ENCODE measurements at regions of chr18 and their contacts with region 1.

Region 1: GRCh38 chr18:59070181-59070912 is 69.3 kb upstream of the SEC11C start:
- ATAC-seq: peak; percentile 90 to 99 (median 95)
- H3K4me3 ChIP-seq: no peak overlapping the region
- H3K27ac ChIP-seq: no peak overlapping the region
- H3K4me1 ChIP-seq: peaks cover 0 to under 1% of the 10 kb centered on the region in 2 donors

Region 2: DNA sequence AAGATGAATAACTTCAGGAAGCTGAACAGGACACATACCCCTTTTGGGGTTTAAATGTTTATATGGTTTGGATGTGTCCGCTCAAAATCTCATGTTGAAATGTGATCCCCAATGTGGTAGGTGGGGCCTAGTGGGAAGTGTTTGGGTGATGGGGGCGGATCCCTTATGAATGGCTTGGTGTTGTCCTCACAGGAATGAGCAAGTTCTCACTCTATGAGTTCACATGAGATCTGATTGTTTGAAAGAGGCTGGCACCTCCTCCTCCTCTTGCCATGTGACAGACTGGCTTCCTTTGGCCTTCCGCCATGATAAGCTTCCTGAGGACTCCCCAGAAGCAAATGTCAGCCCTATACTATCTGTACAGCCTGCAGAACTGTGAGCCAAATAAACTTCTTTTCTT is 294.3 kb before region 1 on chr18:
- in situ Hi-C with region 1: loop called (anchors 5 to 10 kb)
- ATAC-seq: peak in 3 of 8 experiments; percentile 32 to 48 (median 47)
- H3K4me3 ChIP-seq: no peak overlapping the region
- H3K27ac ChIP-seq: no peak overlapping the region
- H3K4me1 ChIP-seq: no peaks in the 10 kb centered on the region

Region 3: DNA sequence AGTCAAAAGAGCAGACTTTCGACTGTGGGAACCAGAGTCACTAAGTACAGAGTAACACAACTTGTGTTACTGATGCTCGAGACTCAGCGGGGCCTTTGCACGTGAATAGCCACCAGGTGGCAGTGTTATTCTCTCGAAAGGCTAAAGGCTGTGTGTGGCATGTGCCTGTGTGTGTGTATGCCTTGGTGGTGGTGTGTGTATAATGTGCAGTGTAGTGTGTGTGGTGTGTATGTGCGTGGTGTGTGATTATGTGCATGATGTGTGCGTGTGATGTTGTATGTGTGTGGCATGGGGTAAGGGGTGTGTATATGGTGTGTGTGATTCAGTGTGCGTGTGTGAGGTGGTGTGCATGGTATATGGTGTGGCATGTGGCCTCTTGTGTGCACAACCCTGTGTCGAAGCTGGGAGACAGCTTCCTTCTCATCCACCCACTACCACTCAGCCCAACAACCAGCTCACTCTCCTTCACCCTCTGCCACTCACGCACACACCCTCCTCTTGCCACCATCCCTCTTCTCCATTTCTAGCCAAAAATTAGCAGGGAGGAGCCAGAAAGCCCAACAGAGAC is 288.6 kb before region 1 on chr18:
- in situ Hi-C with region 1: loop called (anchors 5 to 10 kb)
- ATAC-seq: peak; percentile 78 to 90 (median 89)
- H3K4me3 ChIP-seq: no peak overlapping the region
- H3K27ac ChIP-seq: no peak overlapping the region
- H3K4me1 ChIP-seq: peaks cover 15% of the 10 kb centered on the region in 2 donors

Region 4: DNA sequence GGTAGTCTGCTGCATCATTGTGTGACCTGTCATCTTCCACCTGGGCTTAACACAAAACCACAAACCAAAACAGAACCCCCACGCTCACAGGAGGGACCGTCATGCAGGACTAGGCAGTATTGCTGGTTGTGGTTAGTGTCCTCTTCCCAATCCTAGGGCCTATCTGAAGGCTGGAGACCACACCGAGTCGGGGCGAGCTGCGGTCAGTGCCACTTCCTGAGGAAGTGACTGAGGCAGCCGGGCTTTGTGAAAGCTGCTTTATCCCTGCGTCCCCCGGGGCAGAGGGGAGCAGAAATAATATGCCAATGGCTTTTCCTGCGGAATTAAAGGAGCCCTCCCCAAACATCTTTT is 182.8 kb before region 1 on chr18:
- in situ Hi-C with region 1: loop called in 1 of 9 experiments (anchors 25 kb)
- ATAC-seq: no peak
- H3K4me3 ChIP-seq: no peak overlapping the region
- H3K27ac ChIP-seq: peak overlapping the region in 1 of 2 donors; percentile 8
- H3K4me1 ChIP-seq: peaks cover 4 to 8% of the 10 kb centered on the region in 2 donors

Region 5: DNA sequence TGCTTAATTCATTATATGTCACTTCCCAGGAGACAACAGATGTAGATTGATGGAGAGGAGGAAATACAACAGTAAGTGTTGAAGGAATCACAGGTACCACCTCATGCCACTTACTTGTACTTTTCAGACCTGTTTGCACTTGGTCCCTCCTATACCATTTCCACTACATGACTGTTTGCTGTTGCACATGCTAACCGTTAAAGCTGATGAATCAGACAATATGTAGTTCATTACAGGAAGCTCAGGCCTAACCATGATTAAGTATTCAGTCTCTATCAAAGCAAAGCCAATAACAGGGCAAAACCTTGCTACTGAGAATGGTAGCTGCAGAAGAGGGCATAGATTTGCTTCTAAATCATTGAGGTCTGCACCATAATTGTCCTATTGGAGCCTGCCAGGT is 119.4 kb after region 1 on chr18:
- in situ Hi-C with region 1: no loop called
- ATAC-seq: peak in 2 of 8 experiments; percentile 16 to 31
- H3K4me3 ChIP-seq: no peak overlapping the region
- H3K27ac ChIP-seq: no peak overlapping the region
- H3K4me1 ChIP-seq: no peaks in the 10 kb centered on the region